Right ventricle myocardium superior (tissue), 1 donor: ENCODE measurements at regions of chr11 and their contacts with region 1.

Region 1: DNA sequence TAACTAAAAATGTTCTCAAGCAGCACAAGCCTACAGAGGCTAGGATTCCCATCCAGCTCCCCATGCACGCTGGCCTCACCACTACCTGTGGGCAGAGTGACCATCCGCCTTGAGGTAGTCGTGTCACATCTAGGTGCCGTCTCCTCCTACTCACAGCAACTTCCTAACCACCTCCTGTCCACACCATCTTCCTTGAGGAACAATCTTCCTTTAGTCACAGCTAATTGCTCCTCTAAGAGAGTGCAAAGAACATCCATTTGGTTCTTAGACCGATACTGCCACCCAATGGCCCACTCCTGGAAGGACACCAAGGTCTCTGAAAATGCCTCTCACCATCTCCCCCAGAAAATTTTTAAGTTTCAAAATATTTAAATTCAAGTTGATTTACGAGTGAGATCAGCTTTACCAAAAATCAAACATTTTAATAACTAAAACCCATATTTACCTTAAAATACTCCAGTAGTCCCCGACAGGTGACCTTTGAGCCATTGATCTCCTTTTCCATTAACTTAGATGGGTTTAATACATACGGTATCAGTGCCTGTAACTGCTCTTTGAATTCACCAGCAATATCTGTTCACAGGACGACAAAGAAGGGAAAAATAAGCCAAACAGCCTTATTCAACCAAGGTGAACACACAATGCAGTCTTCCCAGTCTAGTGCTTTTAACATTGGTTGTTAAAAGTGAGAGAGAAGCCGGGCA is 21.7 kb upstream of the PLAAT3 start:
- DNase-seq: no peak
- ATAC-seq: peak; percentile 81

Region 2: DNA sequence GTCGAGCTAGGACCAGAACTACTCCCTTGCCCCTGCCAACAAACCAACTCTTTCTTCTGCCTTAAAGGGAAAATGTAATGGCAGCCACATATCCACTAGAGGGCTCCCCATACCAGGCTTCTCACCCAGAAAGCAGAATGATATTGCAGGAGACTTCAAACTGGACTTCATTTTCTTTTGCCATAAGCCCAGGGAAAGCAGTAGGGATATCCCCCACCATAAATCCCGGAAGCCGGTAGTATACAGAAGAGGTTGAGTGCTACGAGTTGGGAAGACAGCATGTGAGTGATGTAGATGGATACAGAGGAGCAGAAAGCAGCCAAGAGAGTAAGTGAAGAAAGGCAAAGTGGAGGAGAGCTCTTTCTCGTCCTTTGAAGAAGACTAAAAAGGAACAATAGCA is 157.0 kb before region 1 on chr11:
- intact Hi-C with region 1: loop called (anchors 2 kb)
- DNase-seq: no peak
- ATAC-seq: peak; percentile 92

Region 3: GRCh38 chr11:63508009-63508408 is 127.9 kb before region 1 on chr11:
- intact Hi-C with region 1: no loop called
- DNase-seq: peak; percentile 67
- ATAC-seq: peak; percentile 74